ENCODE measurements at regions of chr4 and their contacts with region 1.

Region 1: GRCh38 chr4:38132107-38132673 is 172.0 kb downstream of the PTTG2 start:
- DNase-seq: peak; percentile 63 to 90
- ATAC-seq: peak; percentile 57 to 82 (median 78)
- H3K4me3 ChIP-seq: no peak overlapping the region
- H3K4me3 Mint-ChIP-seq: peak overlapping the region; percentile 76
- H3K27ac ChIP-seq: peak overlapping the region; percentile 85
- H3K27ac Mint-ChIP-seq: peak overlapping the region; percentile 96 to 99
- H3K4me1 ChIP-seq: peaks cover 55% of the 10 kb centered on the region
- H3K4me1 Mint-ChIP-seq: peaks cover 65 to 68% of the 10 kb centered on the region in 2 donors
- H3K27me3 ChIP-seq: no peaks in the 10 kb centered on the region
- H3K27me3 Mint-ChIP-seq: no peaks in the 10 kb centered on the region
- CTCF ChIP-seq: no peak

Region 2: DNA sequence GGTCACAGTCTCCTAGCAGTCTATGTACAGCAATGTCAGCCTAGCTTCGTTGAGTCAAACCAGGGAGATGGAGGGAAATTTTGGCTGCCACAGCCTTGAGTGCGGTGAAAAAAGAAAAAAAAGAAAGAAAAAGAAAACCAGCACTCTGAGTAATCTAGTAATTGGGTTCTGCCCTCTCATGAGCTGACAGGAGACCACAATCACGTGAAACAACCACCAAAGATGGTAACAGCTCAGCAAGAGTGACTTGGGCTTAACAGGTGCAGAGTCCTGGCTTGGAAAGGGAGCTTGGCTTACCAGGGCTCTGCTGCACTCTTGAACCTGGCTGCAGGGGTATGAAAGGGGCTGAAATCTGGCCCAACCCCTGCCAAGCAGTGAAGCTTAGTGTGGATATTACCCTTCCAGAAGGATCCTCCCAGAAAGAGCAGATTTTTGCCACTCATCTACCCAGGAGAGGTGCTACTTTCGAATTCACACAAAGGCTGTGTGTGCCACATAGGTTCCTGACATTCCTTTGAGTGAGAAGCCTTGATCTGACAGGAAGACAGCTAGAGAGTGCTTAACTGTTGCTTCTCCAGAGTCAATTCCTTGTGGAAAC is 178.4 kb after region 1 on chr4:
- intact Hi-C with region 1: loop called (anchors 1 kb)
- DNase-seq: peak; percentile 51 to 92
- ATAC-seq: peak; percentile 86 to 94 (median 88)
- H3K4me3 ChIP-seq: no peak overlapping the region
- H3K4me3 Mint-ChIP-seq: peak overlapping the region; percentile 67
- H3K27ac ChIP-seq: peak overlapping the region; percentile 21
- H3K27ac Mint-ChIP-seq: peak overlapping the region; percentile 81 to 85
- H3K4me1 ChIP-seq: peaks cover 17% of the 10 kb centered on the region
- H3K4me1 Mint-ChIP-seq: peaks cover 34 to 46% of the 10 kb centered on the region in 2 donors
- H3K27me3 ChIP-seq: no peaks in the 10 kb centered on the region
- H3K27me3 Mint-ChIP-seq: no peaks in the 10 kb centered on the region
- CTCF ChIP-seq: no peak

Region 3: GRCh38 chr4:38319456-38320342 is 187.5 kb after region 1 on chr4:
- intact Hi-C with region 1: loop called (anchors 2 kb)
- DNase-seq: peak; percentile 87 to 92
- ATAC-seq: peak; percentile 84 to 90 (median 87)
- H3K4me3 ChIP-seq: peak overlapping the region; percentile 33
- H3K4me3 Mint-ChIP-seq: peak overlapping the region; percentile 88
- H3K27ac ChIP-seq: peak overlapping the region; percentile 84
- H3K27ac Mint-ChIP-seq: peak overlapping the region; percentile 86 to 91
- H3K4me1 ChIP-seq: peaks cover 26% of the 10 kb centered on the region
- H3K4me1 Mint-ChIP-seq: peaks cover 26 to 34% of the 10 kb centered on the region in 2 donors
- H3K27me3 ChIP-seq: no peaks in the 10 kb centered on the region
- H3K27me3 Mint-ChIP-seq: no peaks in the 10 kb centered on the region
- CTCF ChIP-seq: peak; percentile 94

Region 4: GRCh38 chr4:38730830-38731646 is 598.8 kb after region 1 on chr4:
- intact Hi-C with region 1: loop called (anchors 2 kb)
- DNase-seq: peak; percentile 79 to 89
- ATAC-seq: peak; percentile 65 to 76 (median 75)
- H3K4me3 ChIP-seq: no peak overlapping the region
- H3K4me3 Mint-ChIP-seq: no peak overlapping the region
- H3K27ac ChIP-seq: no peak overlapping the region
- H3K27ac Mint-ChIP-seq: peak overlapping the region in 1 of 2 donors; percentile 61
- H3K4me1 ChIP-seq: peaks cover 22% of the 10 kb centered on the region
- H3K4me1 Mint-ChIP-seq: peaks cover 29 to 45% of the 10 kb centered on the region in 2 donors
- H3K27me3 ChIP-seq: peaks cover 2% of the 10 kb centered on the region
- H3K27me3 Mint-ChIP-seq: peaks cover 3 to 11% of the 10 kb centered on the region in 2 donors
- CTCF ChIP-seq: peak; percentile 98